PC-9 (cell line): ENCODE measurements at regions of chr11 and their contacts with region 1.

Region 1: GRCh38 chr11:119095066-119095880 is 6.4 kb downstream of the DPAGT1 start:
- DNase-seq: peak; percentile 98 to 99
- H3K4me3 ChIP-seq: peak overlapping the region; percentile 91
- H3K27ac ChIP-seq: peak overlapping the region; percentile 48
- H3K4me1 ChIP-seq: peaks cover 29% of the 10 kb centered on the region
- H3K27me3 ChIP-seq: no peaks in the 10 kb centered on the region
- CTCF ChIP-seq: peak; percentile 27; the same call in 1 of the 2 replicates

Region 2: DNA sequence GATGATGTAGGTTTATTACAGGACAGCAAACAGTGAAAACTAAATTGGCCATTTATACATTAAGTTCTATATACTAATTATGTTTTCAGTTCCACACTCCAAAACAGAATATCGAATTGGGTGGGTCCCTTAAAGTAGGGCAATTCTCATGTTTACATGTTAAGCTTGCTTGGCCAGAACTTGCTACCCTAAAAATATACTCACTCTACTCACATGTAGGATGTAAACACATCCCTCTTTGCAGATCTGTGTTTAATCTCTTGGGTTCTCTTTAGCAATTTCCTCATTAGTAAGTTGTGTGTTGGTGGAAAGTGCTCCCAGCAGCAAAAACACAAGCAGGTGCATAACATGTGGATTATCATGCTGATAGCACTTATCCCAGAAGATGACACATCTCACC is 281.7 kb before region 1 on chr11:
- CTCF ChIA-PET with region 1: no interaction called
- POLR2A ChIA-PET with region 1: no interaction called
- intact Hi-C with region 1: no loop called
- DNase-seq: no peak
- H3K4me3 ChIP-seq: no peak overlapping the region
- H3K27ac ChIP-seq: no peak overlapping the region
- H3K4me1 ChIP-seq: no peaks in the 10 kb centered on the region
- H3K27me3 ChIP-seq: no peaks in the 10 kb centered on the region
- CTCF ChIP-seq: no peak

Region 3: GRCh38 chr11:119057000-119057769 is 38.1 kb before region 1 on chr11 and contains the start of gene HYOU1:
- CTCF ChIA-PET with region 1: no interaction called
- POLR2A ChIA-PET with region 1: no interaction called
- intact Hi-C with region 1: loop called (anchors 2 kb)
- DNase-seq: peak; percentile 94 to 98
- H3K4me3 ChIP-seq: peak within 1 kb of the TSS; percentile 90
- H3K27ac ChIP-seq: peak within 1 kb of the TSS; percentile 95
- H3K4me1 ChIP-seq: peaks cover 14% of the 10 kb centered on the region
- H3K27me3 ChIP-seq: no peaks in the 10 kb centered on the region
- CTCF ChIP-seq: peak; percentile 41; the same call in 1 of the 2 replicates
- total RNA-seq, gene HYOU1: 92.0 and 117 TPM in 2 replicates

Region 4: GRCh38 chr11:119196833-119197483 is 101.7 kb after region 1 on chr11:
- CTCF ChIA-PET with region 1: no interaction called
- POLR2A ChIA-PET with region 1: no interaction called
- intact Hi-C with region 1: loop called (anchors 2 kb)
- DNase-seq: peak; percentile 69 to 88
- H3K4me3 ChIP-seq: no peak overlapping the region
- H3K27ac ChIP-seq: no peak overlapping the region
- H3K4me1 ChIP-seq: peaks cover 14% of the 10 kb centered on the region
- H3K27me3 ChIP-seq: no peaks in the 10 kb centered on the region
- CTCF ChIP-seq: peak; percentile 95

Region 5: GRCh38 chr11:119381181-119381988 is 286.1 kb after region 1 on chr11 and contains the start of gene USP2:
- CTCF ChIA-PET with region 1: no interaction called
- POLR2A ChIA-PET with region 1: interaction called, 27 read pairs
- intact Hi-C with region 1: no loop called
- DNase-seq: peak; percentile 97 to 98
- H3K4me3 ChIP-seq: peak within 1 kb of the TSS; percentile 56
- H3K27ac ChIP-seq: no peak within 1 kb of the TSS
- H3K4me1 ChIP-seq: peaks cover 37% of the 10 kb centered on the region
- H3K27me3 ChIP-seq: no peaks in the 10 kb centered on the region
- CTCF ChIP-seq: peak; percentile 94
- total RNA-seq, gene USP2: 2.1 and 2.7 TPM in 2 replicates